Breast epithelium (tissue), 4 donors: ENCODE measurements at regions of chr12 and their contacts with region 1.

Region 1: DNA sequence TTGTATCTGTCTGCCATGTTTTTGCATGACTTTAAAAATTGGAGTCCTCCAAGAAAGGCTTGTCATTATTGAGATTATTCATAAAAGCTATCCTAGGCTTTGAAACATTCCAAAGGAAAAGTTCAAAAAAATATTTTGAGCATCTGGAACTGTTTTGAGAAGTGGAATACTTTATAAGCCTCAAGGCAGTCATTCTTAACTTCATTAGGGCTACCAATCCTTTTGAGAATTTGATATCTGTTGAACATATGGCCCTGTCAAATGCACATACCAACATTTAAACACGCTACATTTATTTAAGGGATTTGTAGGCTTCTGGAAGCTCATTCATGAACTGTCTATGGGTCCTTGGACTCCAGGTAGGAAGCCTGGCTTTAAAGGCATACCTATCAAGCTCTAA is 77.0 kb downstream of the TMEM117 start:
- DNase-seq: no peak
- H3K4me3 ChIP-seq: no peak overlapping the region
- H3K27ac ChIP-seq: no peak overlapping the region
- H3K4me1 ChIP-seq: no peaks in the 10 kb centered on the region
- H3K27me3 ChIP-seq: no peaks in the 10 kb centered on the region
- CTCF ChIP-seq: no peak
- POLR2A ChIP-seq: no peak

Region 2: DNA sequence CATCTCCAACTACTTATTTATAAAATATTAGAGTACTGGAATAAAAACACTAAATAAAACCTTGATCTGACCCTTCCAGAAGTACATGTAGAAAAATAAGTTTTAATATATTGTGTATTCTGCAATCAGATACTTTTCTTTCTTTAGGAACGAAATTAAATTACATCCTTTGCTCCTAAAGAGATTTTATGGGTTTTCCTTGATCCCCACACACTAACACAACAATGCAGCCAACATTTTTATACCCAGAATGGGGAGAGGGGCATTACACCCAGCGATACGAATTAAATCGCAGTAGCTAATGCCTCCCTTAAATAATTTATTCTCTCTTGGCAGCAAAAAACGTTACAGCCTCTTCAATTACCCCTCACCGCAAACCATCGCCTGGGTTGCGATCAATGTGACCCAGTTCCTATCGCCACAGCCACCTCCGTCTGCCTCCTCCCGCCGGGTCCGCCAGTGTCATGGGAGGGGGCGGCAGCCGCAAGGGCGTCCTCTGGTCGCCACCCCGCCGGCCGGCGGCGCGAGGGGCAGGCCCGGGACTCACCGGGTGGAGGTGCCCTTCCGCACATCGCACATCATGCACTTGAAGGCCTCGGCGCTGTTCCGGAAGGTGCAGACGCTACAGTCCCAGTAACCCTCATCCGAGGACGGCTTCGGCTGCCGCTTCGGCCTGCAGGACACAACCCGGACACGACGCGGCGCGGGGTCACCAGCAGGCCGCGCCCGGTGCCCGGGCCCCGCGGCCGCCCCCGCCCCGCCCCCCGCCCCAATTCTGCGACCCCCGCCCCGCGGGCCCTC is 1675.6 kb before region 1 on chr12:
- intact Hi-C with region 1: no loop called
- DNase-seq: peak; percentile 55 to 75
- H3K4me3 ChIP-seq: peak overlapping the region; percentile 70 to 99 (median 86)
- H3K27ac ChIP-seq: peak overlapping the region; percentile 94 to 98
- H3K4me1 ChIP-seq: peaks cover 0 to 6% of the 10 kb centered on the region in 2 donors
- H3K27me3 ChIP-seq: no peaks in the 10 kb centered on the region
- CTCF ChIP-seq: peak in 2 of 3 donors; percentile 15 to 32
- POLR2A ChIP-seq: no peak

Region 3: DNA sequence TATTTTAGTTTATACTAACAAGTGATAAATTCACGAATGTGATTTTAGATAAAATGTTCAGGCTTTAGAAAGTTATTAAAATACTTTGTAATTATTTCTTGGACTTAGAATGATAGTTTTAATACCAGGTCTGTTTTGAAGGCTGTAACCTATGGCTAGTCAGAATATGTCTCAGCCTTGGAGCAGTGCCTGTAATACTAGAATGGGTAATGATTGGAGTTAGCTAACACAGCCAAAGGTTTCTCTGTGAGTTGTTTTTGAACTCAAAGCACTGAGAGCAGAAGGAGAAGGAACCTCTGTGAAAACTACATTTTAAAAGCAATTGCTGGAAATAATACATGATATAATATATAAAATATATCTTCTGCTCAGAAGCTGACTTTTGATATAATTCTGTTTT is 33.1 kb after region 1 on chr12:
- intact Hi-C with region 1: loop called (anchors 2 kb)
- DNase-seq: no peak
- H3K4me3 ChIP-seq: no peak overlapping the region
- H3K27ac ChIP-seq: no peak overlapping the region
- H3K4me1 ChIP-seq: no peaks in the 10 kb centered on the region
- H3K27me3 ChIP-seq: no peaks in the 10 kb centered on the region
- CTCF ChIP-seq: no peak
- POLR2A ChIP-seq: no peak